Activated naive CD4-positive, alpha-beta T cell treated with anti-CD3 and anti-CD28 coated beads for 36 hours (primary cell): ENCODE measurements at regions of chr15 and their contacts with region 1.

Region 1: GRCh38 chr15:55407949-55408791 is at the starts of genes CCPG1 and PIERCE2:
- DNase-seq: peak; percentile 90
- H3K4me3 Mint-ChIP-seq: peak within 1 kb of the TSS; percentile 82
- H3K27ac Mint-ChIP-seq: peak within 1 kb of the TSS; percentile 68
- H3K4me1 Mint-ChIP-seq: peaks cover 24% of the 10 kb centered on the region
- H3K27me3 Mint-ChIP-seq: no peaks in the 10 kb centered on the region
- total RNA-seq, gene CCPG1: 9.8 to 11.6 TPM
- total RNA-seq, gene PIERCE2: 0.38 to 0.44 TPM

Region 2: GRCh38 chr15:55196458-55197361 is 211.5 kb before region 1 on chr15 and contains the start of gene RSL24D1:
- CTCF ChIA-PET with region 1: interaction called, 3 read pairs
- intact Hi-C with region 1: loop called (anchors 1 kb)
- DNase-seq: peak; percentile 98
- H3K4me3 Mint-ChIP-seq: no peak within 1 kb of the TSS
- H3K27ac Mint-ChIP-seq: no peak within 1 kb of the TSS
- H3K4me1 Mint-ChIP-seq: peaks cover 16% of the 10 kb centered on the region
- H3K27me3 Mint-ChIP-seq: no peaks in the 10 kb centered on the region
- total RNA-seq, gene RSL24D1: 201 to 209 TPM

Region 3: GRCh38 chr15:55241891-55242290 is 166.3 kb before region 1 on chr15:
- CTCF ChIA-PET with region 1: no interaction called
- intact Hi-C with region 1: loop called (anchors 5 kb)
- DNase-seq: no peak
- H3K4me3 Mint-ChIP-seq: no peak overlapping the region
- H3K27ac Mint-ChIP-seq: peak overlapping the region; percentile 79
- H3K4me1 Mint-ChIP-seq: peaks cover 75% of the 10 kb centered on the region
- H3K27me3 Mint-ChIP-seq: no peaks in the 10 kb centered on the region

Region 4: DNA sequence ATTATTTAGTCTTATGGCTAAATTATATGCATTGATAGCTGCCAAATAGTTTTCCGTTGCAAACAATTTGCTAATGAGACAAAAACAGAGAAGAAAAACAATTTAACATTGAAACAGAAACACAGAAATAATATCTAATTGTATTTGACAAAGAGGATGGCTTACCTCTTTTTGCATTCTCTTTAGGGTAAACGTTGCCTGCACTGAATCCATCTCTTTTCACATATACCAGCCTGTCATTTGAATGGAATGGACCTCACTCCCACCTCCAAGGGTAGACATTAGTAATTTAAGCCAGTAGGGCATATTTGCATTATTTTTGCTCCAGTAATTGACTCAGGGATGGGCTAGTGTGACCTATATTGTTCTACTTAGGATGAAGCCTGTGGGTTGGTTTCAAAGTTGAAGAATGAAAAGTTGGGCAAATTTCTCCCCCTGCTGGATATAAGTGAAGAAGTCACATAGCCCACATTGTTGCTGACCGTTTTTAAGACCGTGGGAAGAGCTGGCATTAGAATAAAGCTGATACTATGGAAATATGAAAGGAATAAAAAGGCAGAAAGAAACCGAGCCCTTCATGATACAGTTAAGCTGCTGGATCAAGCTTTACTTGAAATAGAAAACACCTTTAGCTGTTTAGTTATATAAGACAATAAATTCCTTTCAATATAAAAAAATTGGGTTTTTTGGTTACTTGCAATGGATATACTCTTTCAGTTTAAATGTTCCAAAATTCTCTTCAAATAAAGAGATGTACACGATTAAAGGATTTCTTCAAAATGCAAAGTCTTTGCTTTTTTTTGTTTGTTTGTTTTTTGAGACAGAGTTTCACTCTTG is 27.0 kb after region 1 on chr15:
- CTCF ChIA-PET with region 1: interaction called, 10 read pairs
- intact Hi-C with region 1: no loop called
- DNase-seq: peak; percentile 14
- H3K4me3 Mint-ChIP-seq: no peak overlapping the region
- H3K27ac Mint-ChIP-seq: no peak overlapping the region
- H3K4me1 Mint-ChIP-seq: no peaks in the 10 kb centered on the region
- H3K27me3 Mint-ChIP-seq: no peaks in the 10 kb centered on the region

Region 5: DNA sequence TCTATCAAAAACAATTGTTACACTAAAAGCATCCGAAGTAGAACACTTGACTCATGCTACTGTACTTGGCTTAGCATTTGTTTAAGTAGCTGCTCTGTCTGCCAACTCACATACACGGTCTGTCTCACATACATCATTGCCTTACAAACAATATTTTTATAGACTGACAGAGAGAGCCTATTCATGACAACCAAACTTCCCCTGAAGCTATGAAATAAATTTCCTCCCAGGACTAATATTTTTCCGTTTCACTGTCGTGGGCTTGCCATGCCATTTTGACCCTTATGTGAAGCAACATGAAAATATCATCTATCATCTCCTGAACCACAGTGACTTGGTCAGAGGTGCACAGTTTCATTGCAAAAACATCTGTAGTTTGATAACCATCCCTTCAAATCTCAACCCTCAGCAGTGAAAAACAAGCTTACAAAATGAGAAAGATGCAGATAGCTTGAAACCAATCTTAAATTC is 246.4 kb after region 1 on chr15:
- CTCF ChIA-PET with region 1: no interaction called
- intact Hi-C with region 1: no loop called
- DNase-seq: no peak
- H3K4me3 Mint-ChIP-seq: no peak overlapping the region
- H3K27ac Mint-ChIP-seq: no peak overlapping the region
- H3K4me1 Mint-ChIP-seq: no peaks in the 10 kb centered on the region
- H3K27me3 Mint-ChIP-seq: no peaks in the 10 kb centered on the region

Region 6: GRCh38 chr15:55993111-55993803 is 585.1 kb after region 1 on chr15 and contains the start of gene NEDD4:
- CTCF ChIA-PET with region 1: no interaction called
- intact Hi-C with region 1: loop called (anchors 5 kb)
- DNase-seq: peak; percentile 85
- H3K4me3 Mint-ChIP-seq: peak within 1 kb of the TSS; percentile 89
- H3K27ac Mint-ChIP-seq: peak within 1 kb of the TSS; percentile 80
- H3K4me1 Mint-ChIP-seq: peaks cover 30% of the 10 kb centered on the region
- H3K27me3 Mint-ChIP-seq: peaks cover 8% of the 10 kb centered on the region
- total RNA-seq, gene NEDD4: 29.1 to 32.2 TPM